ENCODE measurements at regions of chr2 and their contacts with region 1.

Region 1: GRCh38 chr2:172461591-172462372 is 34.4 kb downstream of the ITGA6 start:
- DNase-seq: peak; percentile 71 to 80 (median 74)
- ATAC-seq: peak; percentile 79 to 83 (median 80)
- H3K4me3 ChIP-seq: no peak overlapping the region
- H3K27ac ChIP-seq: no peak overlapping the region
- H3K4me1 ChIP-seq: peaks cover 0 to 11% (median 2%) of the 10 kb centered on the region in 4 donors
- H3K27me3 ChIP-seq: no peaks in the 10 kb centered on the region
- CTCF ChIP-seq: peak; percentile 85 to 92 (median 90)
- POLR2A ChIP-seq: no peak

Region 2: DNA sequence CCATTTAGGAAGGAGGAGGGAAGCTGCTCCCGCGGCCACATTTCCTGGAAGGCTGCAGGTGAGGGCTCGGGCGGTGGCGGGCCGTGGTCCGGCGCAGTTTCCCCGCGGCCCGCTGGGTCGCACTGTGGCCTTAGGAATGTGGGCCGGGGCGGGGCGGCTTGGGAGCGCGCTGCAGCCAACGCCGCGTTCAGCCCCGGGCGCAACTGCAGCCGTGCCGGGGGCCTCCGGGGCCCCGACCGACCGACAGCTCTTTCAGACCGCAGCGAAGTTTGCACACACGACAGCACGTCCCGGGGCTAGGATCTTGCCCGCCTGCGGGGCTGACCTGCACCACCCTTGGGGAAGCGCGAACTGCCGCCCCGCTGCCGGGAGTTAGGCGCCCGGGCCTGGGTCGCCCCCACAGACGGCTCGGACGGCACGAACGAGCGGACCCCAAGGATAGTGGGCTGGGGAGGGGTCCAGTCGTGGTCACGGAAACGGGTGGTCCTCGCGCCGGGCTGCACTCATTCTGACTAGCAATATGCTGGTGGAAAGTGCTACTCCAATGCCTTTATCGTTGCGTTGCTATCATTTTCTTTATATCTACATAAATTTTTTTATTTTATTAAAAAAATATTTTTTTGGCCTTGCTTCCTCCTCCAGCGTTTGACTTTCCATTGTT is 289.1 kb before region 1 on chr2:
- intact Hi-C with region 1: loop called (anchors 5 kb)
- DNase-seq: peak; percentile 76 to 80 (median 78)
- ATAC-seq: peak; percentile 100
- H3K4me3 ChIP-seq: peak overlapping the region; percentile 46 to 57 (median 52)
- H3K27ac ChIP-seq: no peak overlapping the region
- H3K4me1 ChIP-seq: no peaks in the 10 kb centered on the region
- H3K27me3 ChIP-seq: no peaks in the 10 kb centered on the region
- CTCF ChIP-seq: peak; percentile 78 to 90 (median 84)
- POLR2A ChIP-seq: no peak

Measured in right lobe of liver (tissue), 6 donors.